Panc1 (cell line): ENCODE measurements at regions of chr3 and their contacts with region 1.

Region 1: DNA sequence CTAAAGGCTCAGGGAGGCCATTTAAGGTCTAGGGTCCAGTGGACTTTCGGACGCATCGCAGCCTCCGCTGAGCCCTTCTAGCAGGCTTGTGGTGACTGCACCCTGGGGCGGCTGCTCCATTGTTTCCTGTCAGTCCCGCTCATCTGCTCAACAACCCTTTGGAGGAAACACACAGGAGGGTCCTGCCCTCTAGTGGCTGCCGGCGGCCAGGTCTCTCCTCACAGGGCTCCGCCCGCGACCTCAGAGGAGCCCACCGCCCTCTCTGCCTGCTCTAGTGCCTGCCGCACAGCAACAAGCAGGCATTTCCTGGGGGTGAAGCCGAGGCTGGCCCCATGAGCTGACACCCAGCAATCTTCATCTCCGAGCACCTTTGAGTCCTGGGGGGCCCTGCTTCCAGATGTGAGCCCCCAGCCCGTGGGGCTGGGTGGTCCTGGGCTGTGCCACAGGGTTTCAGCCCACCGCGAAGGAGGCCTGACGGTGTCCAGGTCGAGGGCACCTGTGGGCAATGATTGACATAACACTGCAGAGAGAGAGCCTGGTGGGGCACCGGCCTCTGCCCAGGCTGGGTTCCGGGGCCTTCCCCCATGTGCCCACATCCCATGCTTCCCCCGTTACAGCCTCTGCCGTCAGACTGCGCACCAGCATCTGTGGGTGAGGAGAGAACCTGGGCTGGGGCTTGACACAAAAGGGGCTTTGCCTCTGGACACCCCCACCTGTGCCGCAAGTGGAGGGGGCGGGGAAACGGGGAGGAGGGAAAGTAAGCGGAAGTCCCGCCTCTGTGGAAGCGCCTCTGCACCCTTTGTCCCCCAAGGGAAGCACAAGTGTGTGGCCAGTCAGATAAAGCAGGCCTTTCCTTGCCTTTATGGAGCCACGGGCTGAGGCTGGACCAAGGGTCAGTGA is 27.0 kb upstream of the SFMBT1 start:
- DNase-seq: peak; percentile 32
- ATAC-seq: peak; percentile 93
- H3K4me3 ChIP-seq: peak overlapping the region; percentile 56 to 72
- H3K27ac ChIP-seq: peak overlapping the region; percentile 72; the same call in 1 of the 2 replicates
- H3K4me1 ChIP-seq: peaks cover 3% of the 10 kb centered on the region
- H3K27me3 ChIP-seq: no peaks in the 10 kb centered on the region
- CTCF ChIP-seq: peak; percentile 92

Region 2: DNA sequence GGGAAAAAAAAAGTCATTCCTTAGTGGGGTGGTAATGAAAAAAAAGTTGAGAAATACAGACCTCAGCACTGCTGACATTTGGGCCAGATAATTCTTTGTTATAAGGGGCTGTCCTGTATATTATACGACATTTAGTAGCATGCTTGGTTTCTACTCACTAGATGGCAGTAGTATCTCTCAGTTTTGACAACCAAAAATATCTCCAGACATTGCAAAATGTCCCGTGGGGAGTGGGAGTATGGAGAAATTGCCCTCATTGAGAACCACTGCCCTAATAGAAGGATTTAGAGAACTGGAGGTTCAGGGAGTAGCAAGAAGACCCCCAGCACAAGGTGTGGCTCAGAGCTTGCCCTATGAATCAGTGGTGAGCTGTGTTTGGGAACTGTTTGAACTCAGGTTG is 1430.4 kb before region 1 on chr3:
- CTCF ChIA-PET with region 1: no interaction called
- POLR2A ChIA-PET with region 1: no interaction called
- in situ Hi-C with region 1: no loop called
- intact Hi-C with region 1: no loop called
- DNase-seq: no peak
- ATAC-seq: no peak
- H3K4me3 ChIP-seq: no peak overlapping the region
- H3K27ac ChIP-seq: no peak overlapping the region
- H3K4me1 ChIP-seq: no peaks in the 10 kb centered on the region
- H3K27me3 ChIP-seq: no peaks in the 10 kb centered on the region
- CTCF ChIP-seq: peak; percentile 50

Region 3: GRCh38 chr3:52851348-52851747 is 221.6 kb before region 1 on chr3:
- CTCF ChIA-PET with region 1: no interaction called
- POLR2A ChIA-PET with region 1: no interaction called
- in situ Hi-C with region 1: no loop called
- intact Hi-C with region 1: loop called (anchors 2 kb)
- DNase-seq: peak; percentile 28
- ATAC-seq: peak; percentile 91
- H3K4me3 ChIP-seq: no peak overlapping the region
- H3K27ac ChIP-seq: no peak overlapping the region
- H3K4me1 ChIP-seq: no peaks in the 10 kb centered on the region
- H3K27me3 ChIP-seq: no peaks in the 10 kb centered on the region
- CTCF ChIP-seq: peak; percentile 72

Region 4: GRCh38 chr3:53049987-53050386 is 22.9 kb before region 1 on chr3:
- CTCF ChIA-PET with region 1: interaction called, 10 read pairs
- POLR2A ChIA-PET with region 1: no interaction called
- in situ Hi-C with region 1: no loop called
- intact Hi-C with region 1: no loop called
- DNase-seq: no peak
- ATAC-seq: no peak
- H3K4me3 ChIP-seq: no peak overlapping the region
- H3K27ac ChIP-seq: no peak overlapping the region
- H3K4me1 ChIP-seq: no peaks in the 10 kb centered on the region
- H3K27me3 ChIP-seq: no peaks in the 10 kb centered on the region
- CTCF ChIP-seq: no peak